GM12878 (cell line): ENCODE measurements at regions of chr19 and their contacts with region 1.

Region 1: GRCh38 chr19:35462476-35462953 is 14.5 kb downstream of the FFAR2 start:
- DNase-seq: peak; percentile 96
- ATAC-seq: peak; percentile 79
- H3K4me3 ChIP-seq: peak overlapping the region; percentile 33; the same call in 1 of the 2 replicates
- H3K27ac ChIP-seq: peak overlapping the region; percentile 73
- H3K4me1 ChIP-seq: peaks cover 56% of the 10 kb centered on the region
- H3K27me3 ChIP-seq: no peaks in the 10 kb centered on the region
- CTCF ChIP-seq: peak in 1 of 3 experiments; percentile 42; a peak in 2 of 6 replicates
- EP300 ChIP-seq: peak; percentile 92 to 97
- POLR2A ChIP-seq: no peak
- RAD21 ChIP-seq: peak; percentile 65

Region 2: DNA sequence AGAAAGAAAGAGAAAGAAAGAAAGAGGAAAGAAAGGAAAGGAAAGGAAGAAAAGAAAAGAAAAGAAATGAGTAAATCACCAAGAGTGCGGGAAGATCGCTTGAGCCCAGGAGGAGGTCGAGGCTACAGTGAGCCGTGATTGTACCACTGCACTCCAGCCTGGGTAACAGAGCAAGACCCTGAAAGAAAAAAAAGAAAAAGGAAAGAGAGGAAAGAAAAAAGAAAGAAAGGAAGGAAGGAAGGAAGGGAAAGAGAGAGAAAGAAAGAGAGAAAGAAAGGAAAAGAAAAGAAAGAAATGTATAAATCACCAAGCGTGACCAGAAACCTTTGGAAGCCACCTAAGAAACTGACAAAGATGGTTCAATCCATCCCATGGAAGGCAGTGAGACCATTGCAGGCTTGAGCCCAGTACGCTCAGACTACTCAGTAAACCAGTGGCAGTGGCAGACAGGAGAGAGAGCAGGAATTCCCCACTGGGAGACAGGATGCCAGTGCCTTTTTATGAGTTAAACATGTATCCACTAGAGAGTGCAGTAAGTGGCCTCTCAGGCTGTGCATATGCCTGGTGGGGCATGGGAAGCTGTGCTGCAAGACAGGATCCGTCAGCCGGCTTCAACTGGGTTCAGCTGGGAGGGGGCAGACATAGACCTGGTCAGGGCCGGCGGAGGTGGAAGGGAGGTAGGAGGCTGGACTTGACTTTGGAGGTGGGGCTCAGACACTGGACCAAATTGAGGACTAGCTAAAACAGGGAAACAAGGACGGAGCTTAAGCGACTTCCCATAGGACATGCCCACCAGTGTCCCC is 86.8 kb before region 1 on chr19:
- CTCF ChIA-PET with region 1: interaction called, 3 read pairs
- POLR2A ChIA-PET with region 1: interaction called, 16 read pairs
- RAD21 ChIA-PET with region 1: interaction called, 37 read pairs
- SMC1A ChIA-PET with region 1: interaction called, 22 read pairs
- in situ Hi-C with region 1: no loop called
- intact Hi-C with region 1: no loop called
- DNase-seq: no peak
- ATAC-seq: peak; percentile 36; the same call in 2 of the 3 replicates
- H3K4me3 ChIP-seq: no peak overlapping the region
- H3K27ac ChIP-seq: peak overlapping the region; percentile 51; the same call in 1 of the 2 replicates
- H3K4me1 ChIP-seq: peaks cover 31% of the 10 kb centered on the region
- H3K27me3 ChIP-seq: no peaks in the 10 kb centered on the region
- CTCF ChIP-seq: no peak
- EP300 ChIP-seq: no peak
- POLR2A ChIP-seq: no peak
- RAD21 ChIP-seq: no peak

Region 3: DNA sequence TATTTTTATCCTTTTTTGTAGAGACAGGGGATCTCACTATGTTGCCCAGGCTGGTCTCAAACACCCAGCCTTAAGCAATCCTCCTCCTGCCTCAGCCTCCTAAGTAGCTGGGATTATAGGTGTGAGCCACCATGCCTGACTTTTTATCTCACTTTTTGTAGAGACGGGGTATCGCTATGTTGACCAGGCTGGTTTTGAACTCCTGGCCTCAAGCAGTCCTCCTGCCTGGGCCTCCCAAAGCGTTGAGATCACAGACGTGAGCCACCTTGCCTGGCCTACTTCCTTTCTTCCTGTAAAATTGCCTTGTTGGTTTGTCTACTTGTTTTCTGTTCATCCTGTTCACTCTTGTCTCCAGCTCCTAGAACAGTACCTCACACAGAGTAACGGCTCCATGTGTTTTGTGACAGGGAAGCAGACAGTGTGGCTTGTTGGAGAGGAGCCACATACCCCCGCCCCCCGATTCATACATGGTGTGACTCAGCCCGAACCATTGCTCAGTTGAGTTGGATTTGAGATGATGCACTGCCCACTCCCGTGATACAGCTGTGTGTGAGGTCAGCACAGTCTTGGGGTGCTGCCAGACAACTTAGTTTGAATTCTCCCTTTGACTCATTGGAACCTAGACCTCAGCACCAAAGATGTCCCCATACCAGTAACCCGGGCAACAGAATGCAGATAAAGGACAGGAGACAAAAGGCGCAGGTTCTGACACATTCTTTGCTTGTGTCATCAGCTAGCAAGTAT is 57.5 kb before region 1 on chr19:
- CTCF ChIA-PET with region 1: interaction called, 35 read pairs
- POLR2A ChIA-PET with region 1: interaction called, 8 read pairs
- RAD21 ChIA-PET with region 1: interaction called, 38 read pairs
- SMC1A ChIA-PET with region 1: interaction called, 70 read pairs
- in situ Hi-C with region 1: no loop called
- intact Hi-C with region 1: loop called (anchors 2 kb)
- DNase-seq: peak; percentile 95
- ATAC-seq: peak; percentile 80
- H3K4me3 ChIP-seq: no peak overlapping the region
- H3K27ac ChIP-seq: peak overlapping the region; percentile 79
- H3K4me1 ChIP-seq: peaks cover 57% of the 10 kb centered on the region
- H3K27me3 ChIP-seq: no peaks in the 10 kb centered on the region
- CTCF ChIP-seq: no peak
- EP300 ChIP-seq: peak; percentile 90
- POLR2A ChIP-seq: no peak
- RAD21 ChIP-seq: no peak

Region 4: DNA sequence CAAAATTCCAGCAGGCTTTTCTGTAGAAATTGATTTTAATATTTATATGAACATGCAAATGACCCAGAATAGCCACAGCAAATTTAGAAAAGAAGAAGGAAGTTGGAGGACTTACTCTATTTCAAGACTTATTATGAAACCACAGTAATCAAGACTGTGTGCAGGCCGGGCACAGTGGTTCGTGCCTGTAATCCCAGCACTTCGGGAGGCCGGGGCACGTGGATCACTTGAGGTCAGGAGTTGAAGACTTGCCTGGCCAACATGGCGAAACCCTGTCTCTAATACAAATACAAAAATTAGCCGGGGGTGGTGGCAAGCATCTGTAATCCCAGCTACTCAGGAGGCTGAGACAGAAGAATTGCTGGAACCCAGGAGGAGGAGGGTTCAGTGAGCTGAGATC is 20.4 kb before region 1 on chr19:
- CTCF ChIA-PET with region 1: interaction called, 7 read pairs
- POLR2A ChIA-PET with region 1: interaction called, 16 read pairs
- RAD21 ChIA-PET with region 1: interaction called, 67 read pairs
- SMC1A ChIA-PET with region 1: interaction called, 109 read pairs
- in situ Hi-C with region 1: no loop called
- intact Hi-C with region 1: no loop called
- DNase-seq: no peak
- ATAC-seq: peak; percentile 65
- H3K4me3 ChIP-seq: no peak overlapping the region
- H3K27ac ChIP-seq: no peak overlapping the region; the same call in 1 of the 2 replicates
- H3K4me1 ChIP-seq: peaks cover 33% of the 10 kb centered on the region
- H3K27me3 ChIP-seq: no peaks in the 10 kb centered on the region
- CTCF ChIP-seq: no peak
- EP300 ChIP-seq: no peak
- POLR2A ChIP-seq: no peak
- RAD21 ChIP-seq: no peak

Region 5: GRCh38 chr19:35449053-35449687 is 13.3 kb before region 1 on chr19:
- CTCF ChIA-PET with region 1: interaction called, 21 read pairs
- POLR2A ChIA-PET with region 1: interaction called, 35 read pairs
- RAD21 ChIA-PET with region 1: interaction called, 67 read pairs
- SMC1A ChIA-PET with region 1: interaction called, 109 read pairs
- in situ Hi-C with region 1: no loop called
- intact Hi-C with region 1: loop called (anchors 1 kb)
- DNase-seq: no peak
- ATAC-seq: no peak
- H3K4me3 ChIP-seq: 0 out of 2 replicates have a peak overlapping the region, but pooled peaks have one; percentile 4
- H3K27ac ChIP-seq: no peak overlapping the region
- H3K4me1 ChIP-seq: peaks cover 56% of the 10 kb centered on the region
- H3K27me3 ChIP-seq: no peaks in the 10 kb centered on the region
- CTCF ChIP-seq: no peak
- EP300 ChIP-seq: no peak
- POLR2A ChIP-seq: no peak
- RAD21 ChIP-seq: no peak

Region 6: GRCh38 chr19:35569281-35569781 is 106.8 kb after region 1 on chr19:
- CTCF ChIA-PET with region 1: no interaction called
- POLR2A ChIA-PET with region 1: no interaction called
- RAD21 ChIA-PET with region 1: no interaction called
- SMC1A ChIA-PET with region 1: no interaction called
- in situ Hi-C with region 1: no loop called
- intact Hi-C with region 1: no loop called
- DNase-seq: no peak
- ATAC-seq: no peak
- H3K4me3 ChIP-seq: no peak overlapping the region
- H3K27ac ChIP-seq: no peak overlapping the region
- H3K4me1 ChIP-seq: no peaks in the 10 kb centered on the region
- H3K27me3 ChIP-seq: peaks cover 2 to 4% of the 10 kb centered on the region in 2 experiments; a peak in 1 of 4 replicates
- CTCF ChIP-seq: no peak
- EP300 ChIP-seq: no peak
- POLR2A ChIP-seq: no peak
- RAD21 ChIP-seq: no peak